ENCODE measurements at regions of chr6 and their contacts with region 1.

Region 1: GRCh38 chr6:17967668-17968518 is 19.5 kb downstream of the KIF13A start:
- DNase-seq: peak; percentile 32 to 64
- ATAC-seq: peak; percentile 90 to 92 (median 92)
- H3K4me3 ChIP-seq: no peak overlapping the region
- H3K27ac ChIP-seq: peak overlapping the region; percentile 52
- H3K4me1 ChIP-seq: peaks cover 81% of the 10 kb centered on the region
- H3K27me3 ChIP-seq: no peaks in the 10 kb centered on the region
- CTCF ChIP-seq: no peak

Region 2: DNA sequence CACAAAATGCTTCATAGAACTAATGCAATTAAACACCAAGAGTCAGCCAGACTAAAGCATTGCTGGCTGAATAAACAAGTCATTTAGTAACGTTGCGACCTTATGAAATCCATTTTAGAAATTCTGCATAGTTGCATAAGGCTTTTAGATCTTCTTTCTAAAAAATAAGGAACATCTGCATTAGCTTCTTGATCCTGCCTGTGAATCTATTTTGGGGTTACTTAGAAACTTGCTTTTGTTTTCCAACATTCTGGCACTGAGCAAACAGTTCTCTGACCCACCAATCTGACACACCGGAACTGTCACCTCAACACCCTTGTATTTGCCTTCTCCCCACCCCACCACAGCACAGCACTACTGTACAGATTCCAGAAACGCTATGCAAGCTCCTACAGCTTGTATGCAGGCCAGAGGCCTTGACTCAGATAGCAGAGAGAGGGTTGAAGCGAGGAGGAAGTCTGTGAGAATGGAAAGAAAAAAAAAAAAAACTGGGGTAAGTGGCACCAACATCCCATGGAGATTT is 35.5 kb before region 1 on chr6:
- intact Hi-C with region 1: loop called in 1 of 2 experiments (anchors 5 kb)
- DNase-seq: peak in 1 of 2 donors; percentile 41
- ATAC-seq: peak; percentile 71 to 94 (median 86)
- H3K4me3 ChIP-seq: no peak overlapping the region
- H3K27ac ChIP-seq: peak overlapping the region; percentile 76
- H3K4me1 ChIP-seq: peaks cover 86% of the 10 kb centered on the region
- H3K27me3 ChIP-seq: no peaks in the 10 kb centered on the region
- CTCF ChIP-seq: no peak